ENCODE measurements at regions of chr9 and their contacts with region 1.

Region 1: DNA sequence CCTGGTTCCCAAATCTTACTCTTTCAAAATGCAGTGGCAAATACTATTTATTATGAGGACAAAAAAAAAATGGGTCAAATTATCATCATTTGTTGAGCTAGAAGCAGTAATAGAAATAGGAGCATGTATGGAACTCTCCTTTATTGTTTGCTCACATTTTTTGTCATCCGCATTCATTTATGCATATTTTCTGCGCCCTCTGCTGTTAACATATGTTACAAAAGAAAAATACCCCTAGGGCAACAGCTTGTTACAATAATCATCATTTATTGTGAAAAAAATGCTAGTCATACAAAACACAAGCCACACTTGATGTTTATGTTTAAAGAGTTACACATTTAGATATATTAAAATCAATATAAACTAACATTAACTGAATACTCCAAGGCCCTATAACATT is 328.2 kb downstream of the TUSC1 start:
- DNase-seq: no peak
- ATAC-seq: no peak
- H3K4me3 Mint-ChIP-seq: no peak overlapping the region
- H3K27ac Mint-ChIP-seq: no peak overlapping the region
- H3K4me1 Mint-ChIP-seq: no peaks in the 10 kb centered on the region
- H3K27me3 Mint-ChIP-seq: no peaks in the 10 kb centered on the region
- CTCF ChIP-seq: no peak

Region 2: DNA sequence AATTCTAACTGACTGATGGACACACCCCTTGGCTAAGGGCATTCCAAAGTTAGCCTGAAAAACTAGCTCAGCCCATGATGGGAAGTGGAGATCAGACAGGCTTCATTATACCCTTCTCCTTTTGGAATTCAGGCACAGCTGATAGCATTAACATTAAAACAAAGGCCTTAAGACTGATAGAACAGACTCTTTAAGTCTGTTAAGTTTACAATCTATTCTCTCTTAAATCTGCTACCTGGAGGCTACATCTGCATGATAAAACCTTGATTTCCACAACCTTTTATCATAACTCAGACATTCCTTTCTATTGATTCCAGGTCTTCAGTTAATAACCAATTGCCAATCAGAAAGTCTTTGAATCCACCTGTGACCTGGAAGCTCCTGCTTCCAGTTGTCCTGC is 46.8 kb after region 1 on chr9:
- CTCF ChIA-PET with region 1: no interaction called
- POLR2A ChIA-PET with region 1: no interaction called
- intact Hi-C with region 1: loop called (anchors 2 kb)
- DNase-seq: no peak
- ATAC-seq: no peak
- H3K4me3 Mint-ChIP-seq: no peak overlapping the region
- H3K27ac Mint-ChIP-seq: no peak overlapping the region
- H3K4me1 Mint-ChIP-seq: no peaks in the 10 kb centered on the region
- H3K27me3 Mint-ChIP-seq: no peaks in the 10 kb centered on the region
- CTCF ChIP-seq: no peak